ENCODE measurements at regions of chr11 and their contacts with region 1.

Region 1: GRCh38 chr11:71448257-71449171 is at the start of gene DHCR7:
- DNase-seq: peak; percentile 99
- H3K4me3 Mint-ChIP-seq: peak within 1 kb of the TSS; percentile 93
- H3K27ac Mint-ChIP-seq: peak within 1 kb of the TSS; percentile 89
- H3K4me1 Mint-ChIP-seq: peaks cover 50% of the 10 kb centered on the region
- H3K27me3 Mint-ChIP-seq: no peaks in the 10 kb centered on the region
- total RNA-seq, gene DHCR7: 112 and 116 TPM in 2 replicates

Region 2: GRCh38 chr11:71489311-71490048 is 41.0 kb after region 1 on chr11:
- intact Hi-C with region 1: loop called (anchors 1 kb)
- DNase-seq: peak; percentile 81
- H3K4me3 Mint-ChIP-seq: peak overlapping the region; percentile 59
- H3K27ac Mint-ChIP-seq: peak overlapping the region; percentile 91
- H3K4me1 Mint-ChIP-seq: peaks cover 27% of the 10 kb centered on the region
- H3K27me3 Mint-ChIP-seq: no peaks in the 10 kb centered on the region

Region 3: DNA sequence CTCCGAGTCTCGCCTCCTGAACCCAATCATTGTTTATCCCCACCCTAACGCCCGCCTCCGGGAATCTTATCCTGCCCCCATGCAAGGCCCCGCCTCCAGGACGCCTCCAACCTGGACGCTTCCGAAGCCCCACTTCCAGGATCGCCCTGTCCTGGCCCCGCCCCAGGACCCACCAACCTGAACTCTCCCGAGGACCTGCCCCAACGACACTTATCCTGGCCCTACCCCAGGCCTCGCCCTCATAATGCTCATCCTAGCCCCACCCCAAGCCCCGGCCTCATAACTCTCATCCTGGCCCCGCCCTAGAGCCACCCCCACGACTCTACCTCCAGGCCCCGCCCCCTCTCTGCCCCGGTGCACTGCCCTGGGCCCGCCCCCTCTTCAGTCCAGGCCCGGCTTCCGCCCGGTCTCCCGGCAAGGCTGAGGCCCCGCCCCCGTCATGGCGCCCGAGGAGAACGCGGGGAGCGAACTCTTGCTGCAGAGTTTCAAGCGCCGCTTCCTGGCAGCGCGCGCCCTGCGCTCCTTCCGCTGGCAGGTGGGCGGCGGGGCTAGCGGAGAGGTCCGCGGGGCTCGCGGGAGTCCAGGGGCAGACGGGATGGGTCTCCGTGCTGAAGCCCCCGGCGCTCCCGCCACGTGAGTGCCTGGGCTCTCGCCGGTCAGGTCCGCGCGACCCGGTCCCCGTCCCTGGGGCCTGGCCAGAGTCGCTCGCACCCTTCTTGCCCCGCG is 338.7 kb after region 1 on chr11:
- intact Hi-C with region 1: loop called (anchors 10 kb)
- DNase-seq: peak; percentile 98
- H3K4me3 Mint-ChIP-seq: peak overlapping the region; percentile 91
- H3K27ac Mint-ChIP-seq: peak overlapping the region; percentile 91
- H3K4me1 Mint-ChIP-seq: peaks cover 16% of the 10 kb centered on the region
- H3K27me3 Mint-ChIP-seq: no peaks in the 10 kb centered on the region